GM10248 (cell line): ENCODE measurements at regions of chr4 and their contacts with region 1.

Region 1: GRCh38 chr4:38759113-38759789 is 23.5 kb downstream of the TLR10 start:
- DNase-seq: peak; percentile 45
- CTCF ChIP-seq: peak; percentile 62

Region 2: GRCh38 chr4:38696697-38697096 is 62.6 kb before region 1 on chr4:
- CTCF ChIA-PET with region 1: no interaction called
- POLR2A ChIA-PET with region 1: no interaction called
- DNase-seq: no peak
- CTCF ChIP-seq: no peak

Region 3: GRCh38 chr4:38730830-38731646 is 28.2 kb before region 1 on chr4:
- CTCF ChIA-PET with region 1: interaction called, 14 read pairs
- POLR2A ChIA-PET with region 1: no interaction called
- DNase-seq: peak; percentile 81
- CTCF ChIP-seq: peak; percentile 87

Region 4: DNA sequence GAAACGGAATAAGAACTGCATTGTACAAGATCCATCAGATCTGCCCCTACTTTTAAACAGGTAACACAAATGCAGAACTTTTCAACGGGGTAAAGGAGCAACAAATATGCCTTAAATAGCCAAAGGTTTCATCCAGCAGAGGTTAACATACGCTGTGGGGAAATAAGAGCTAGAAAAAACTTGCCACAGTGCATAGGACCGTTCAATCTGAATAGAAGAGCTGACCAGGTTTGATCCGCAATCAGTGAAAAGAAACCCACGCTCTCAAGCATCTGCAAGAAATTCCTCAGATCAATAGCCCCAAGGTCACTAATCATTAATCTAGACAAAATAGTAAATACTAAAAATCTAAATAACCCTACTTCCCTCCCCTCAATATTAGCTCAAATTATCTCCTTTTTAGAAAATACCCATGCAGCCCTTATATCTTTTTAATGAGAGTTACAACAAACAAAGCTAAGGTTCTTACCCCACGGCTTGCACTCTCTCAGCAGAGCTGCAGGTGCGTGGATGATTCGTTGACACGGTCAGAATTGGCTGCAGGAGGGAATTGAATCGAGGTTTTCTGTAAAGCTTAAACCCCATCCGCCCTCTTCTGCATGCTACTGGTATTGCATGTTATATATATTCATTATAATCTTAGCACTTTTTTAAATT is 23.3 kb after region 1 on chr4 and contains the start of gene TLR10:
- CTCF ChIA-PET with region 1: interaction called, 248 read pairs
- POLR2A ChIA-PET with region 1: interaction called, 11 read pairs
- DNase-seq: peak; percentile 67
- CTCF ChIP-seq: peak; percentile 55

Region 5: DNA sequence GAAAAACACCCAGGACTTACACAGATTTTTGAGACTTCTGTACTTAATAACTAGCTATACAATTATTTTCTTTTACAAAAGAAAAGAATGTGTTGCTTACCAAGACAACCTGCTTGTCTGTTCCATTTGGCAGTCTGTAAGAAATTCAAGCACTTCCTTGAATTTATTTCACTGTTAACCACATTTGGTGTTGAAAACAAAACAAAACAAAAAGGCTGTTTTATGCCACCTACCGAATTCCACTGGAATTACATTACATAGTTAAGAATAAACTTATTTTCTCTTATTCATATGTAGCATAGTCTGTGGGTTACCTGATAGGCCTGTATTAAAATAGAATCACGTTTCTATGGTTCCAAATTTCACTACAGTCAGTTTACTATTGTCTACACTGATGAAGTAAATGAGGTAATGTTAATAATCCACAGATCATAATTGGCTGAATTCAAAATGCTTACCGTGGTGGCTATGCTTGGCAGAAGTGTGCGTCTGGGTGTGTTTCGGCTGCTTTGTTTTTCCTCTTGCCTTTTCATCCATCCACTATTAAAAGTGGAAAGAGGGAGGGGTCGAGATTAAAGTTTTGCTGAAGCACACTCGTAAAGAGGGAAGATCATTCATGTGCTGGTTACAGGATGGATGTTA is 45.5 kb after region 1 on chr4 and contains the start of gene TLR1:
- CTCF ChIA-PET with region 1: interaction called, 128 read pairs
- POLR2A ChIA-PET with region 1: interaction called, 8 read pairs
- DNase-seq: no peak
- CTCF ChIP-seq: peak; percentile 41

Region 6: DNA sequence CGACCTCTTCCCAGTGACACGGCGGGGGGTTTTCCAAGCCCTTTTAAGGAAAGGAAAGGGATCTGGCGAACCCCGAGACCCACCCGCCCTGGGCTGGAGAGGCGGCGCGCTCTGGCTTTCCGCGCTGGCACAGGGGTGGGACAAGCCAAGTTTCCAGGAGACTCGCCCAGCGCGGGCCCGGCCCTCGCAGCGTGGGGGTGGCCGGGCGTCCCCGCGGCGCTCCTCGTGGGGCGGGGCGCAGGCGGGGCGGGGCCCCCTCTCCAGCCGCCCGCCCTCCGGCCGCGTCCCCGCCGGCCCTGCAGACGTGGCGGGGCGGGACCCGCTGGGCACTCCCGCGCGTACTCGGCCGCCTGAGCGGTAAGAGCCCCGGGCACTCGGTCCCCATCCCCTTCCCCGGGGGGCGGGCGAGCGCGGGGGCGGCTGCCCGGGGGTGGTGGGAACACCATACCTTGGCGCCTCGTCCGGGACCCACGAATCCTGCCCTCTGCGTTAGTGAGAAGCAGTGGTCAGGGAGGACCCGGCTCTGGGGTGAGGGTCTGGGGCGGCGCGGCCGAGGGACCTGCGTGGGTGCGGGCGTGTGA is 108.3 kb after region 1 on chr4 and contains the start of gene FAM114A1:
- CTCF ChIA-PET with region 1: interaction called, 24 read pairs
- POLR2A ChIA-PET with region 1: no interaction called
- DNase-seq: peak; percentile 92
- CTCF ChIP-seq: no peak

Region 7: GRCh38 chr4:39134683-39135319 is 375.6 kb after region 1 on chr4:
- CTCF ChIA-PET with region 1: interaction called, 47 read pairs
- POLR2A ChIA-PET with region 1: no interaction called
- DNase-seq: no peak
- CTCF ChIP-seq: no peak

Region 8: GRCh38 chr4:39441593-39441992 is 682.3 kb after region 1 on chr4:
- CTCF ChIA-PET with region 1: no interaction called
- POLR2A ChIA-PET with region 1: no interaction called
- DNase-seq: no peak
- CTCF ChIP-seq: no peak